Ovary (tissue), 10 donors: ENCODE measurements at regions of chr19 and their contacts with region 1.

Region 1: DNA sequence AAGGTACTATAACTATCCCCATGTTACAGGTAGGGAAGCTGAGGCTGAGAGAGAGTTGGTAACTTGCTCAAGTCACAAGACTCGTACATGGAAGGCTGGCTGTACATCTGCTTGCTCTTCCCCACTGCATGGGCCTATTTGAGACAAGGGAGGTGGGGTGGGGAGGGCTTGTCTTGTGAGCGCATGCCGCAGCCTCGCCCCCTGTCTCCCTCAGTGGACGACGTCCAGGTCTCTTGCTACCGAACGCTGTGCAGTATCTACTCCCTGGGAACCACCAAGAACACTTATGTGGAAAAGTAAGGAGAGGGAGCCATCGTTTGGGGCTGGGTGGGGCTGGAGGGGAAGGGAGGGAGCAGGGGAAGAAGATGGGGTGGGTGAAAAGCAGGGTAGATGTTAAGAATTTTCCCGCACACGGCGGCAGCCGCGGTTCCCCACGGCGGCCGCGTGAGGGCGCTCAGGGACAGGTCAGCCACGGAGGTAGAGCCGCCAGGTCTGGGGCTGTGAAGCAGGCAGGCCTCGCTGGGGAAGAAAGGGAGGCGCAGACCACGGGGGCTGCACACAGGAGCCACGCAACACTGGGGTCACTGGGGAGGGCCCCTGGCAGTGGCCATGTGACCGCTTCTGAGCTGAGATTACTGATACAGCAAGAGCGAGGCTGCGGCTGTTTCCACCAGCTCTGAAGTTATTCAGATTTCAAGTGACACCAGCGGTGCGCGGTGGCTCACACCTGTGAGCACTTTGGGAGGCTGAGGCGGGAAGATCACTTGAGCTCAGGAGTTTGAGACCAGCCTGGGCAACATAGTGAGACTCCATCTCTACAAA is 81.5 kb downstream of the RYR1 start:
- DNase-seq: peak; percentile 52 to 81 (median 65)
- H3K4me3 ChIP-seq: no peak overlapping the region
- H3K27ac ChIP-seq: no peak overlapping the region
- H3K4me1 ChIP-seq: peaks cover 2% of the 10 kb centered on the region
- H3K27me3 ChIP-seq: no peaks in the 10 kb centered on the region
- CTCF ChIP-seq: peak; percentile 51 to 83 (median 67)
- EP300 ChIP-seq: no peak
- POLR2A ChIP-seq: no peak

Region 2: GRCh38 chr19:38470788-38471480 is 44.1 kb before region 1 on chr19:
- intact Hi-C with region 1: no loop called
- DNase-seq: no peak
- H3K4me3 ChIP-seq: no peak overlapping the region
- H3K27ac ChIP-seq: no peak overlapping the region
- H3K4me1 ChIP-seq: no peaks in the 10 kb centered on the region
- H3K27me3 ChIP-seq: no peaks in the 10 kb centered on the region
- CTCF ChIP-seq: no peak
- EP300 ChIP-seq: no peak
- POLR2A ChIP-seq: no peak

Region 3: GRCh38 chr19:38606131-38606530 is 91.1 kb after region 1 on chr19:
- intact Hi-C with region 1: loop called in 1 of 4 experiments (anchors 10 kb)
- DNase-seq: no peak
- H3K4me3 ChIP-seq: no peak overlapping the region
- H3K27ac ChIP-seq: no peak overlapping the region
- H3K4me1 ChIP-seq: no peaks in the 10 kb centered on the region
- H3K27me3 ChIP-seq: no peaks in the 10 kb centered on the region
- CTCF ChIP-seq: no peak
- EP300 ChIP-seq: no peak
- POLR2A ChIP-seq: no peak

Region 4: DNA sequence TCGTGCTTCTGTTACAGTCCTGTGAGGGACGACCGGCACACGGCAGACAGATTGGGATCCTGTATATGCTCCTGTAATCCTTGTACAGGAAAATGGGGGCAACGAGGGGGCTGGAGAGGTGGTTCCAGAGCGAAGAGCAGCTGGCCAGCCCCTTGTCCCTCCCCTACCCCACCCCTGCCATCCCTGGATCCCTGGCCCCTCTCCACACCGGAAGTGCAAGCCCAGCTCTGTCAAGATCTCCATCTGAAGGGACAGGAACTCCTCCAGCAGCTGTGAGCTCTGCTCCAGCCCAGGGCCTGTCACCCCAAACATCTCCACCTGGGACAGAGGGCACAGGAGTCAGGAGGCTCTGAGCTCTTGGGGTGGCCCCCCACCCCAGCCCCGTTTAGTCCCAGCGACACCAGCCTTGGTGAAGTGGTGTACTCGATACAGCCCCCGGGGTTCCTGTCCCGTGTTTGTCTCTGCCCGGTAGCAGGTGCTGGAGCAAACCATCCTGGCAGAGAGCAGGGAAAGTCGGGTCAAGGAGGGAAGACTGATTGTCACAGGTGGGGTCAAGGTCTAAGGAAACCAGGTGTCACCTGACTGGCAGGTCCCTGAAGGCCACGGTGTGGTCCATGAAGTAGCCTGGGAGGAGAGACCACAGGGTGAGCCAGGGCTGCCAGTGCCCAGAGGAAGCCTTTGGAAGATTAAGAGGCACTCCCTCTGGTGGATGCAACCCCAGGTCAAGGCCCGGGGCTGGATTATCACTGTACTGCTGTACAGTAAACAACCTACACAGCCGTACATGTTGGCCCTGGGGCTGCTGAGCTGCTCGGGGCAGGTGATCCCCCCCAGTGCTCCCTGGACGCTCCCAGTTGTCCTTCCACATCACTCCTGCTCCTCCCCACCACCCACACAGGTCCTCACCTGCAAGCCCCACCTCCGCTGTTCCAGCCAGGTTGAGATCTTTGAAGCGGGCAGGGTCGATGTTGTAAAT is 402.8 kb after region 1 on chr19:
- intact Hi-C with region 1: loop called in 1 of 4 experiments (anchors 10 kb)
- DNase-seq: peak in 1 of 5 donors; percentile 36
- H3K4me3 ChIP-seq: no peak overlapping the region
- H3K27ac ChIP-seq: no peak overlapping the region
- H3K4me1 ChIP-seq: no peaks in the 10 kb centered on the region
- H3K27me3 ChIP-seq: no peaks in the 10 kb centered on the region
- CTCF ChIP-seq: no peak
- EP300 ChIP-seq: no peak
- POLR2A ChIP-seq: no peak

Region 5: DNA sequence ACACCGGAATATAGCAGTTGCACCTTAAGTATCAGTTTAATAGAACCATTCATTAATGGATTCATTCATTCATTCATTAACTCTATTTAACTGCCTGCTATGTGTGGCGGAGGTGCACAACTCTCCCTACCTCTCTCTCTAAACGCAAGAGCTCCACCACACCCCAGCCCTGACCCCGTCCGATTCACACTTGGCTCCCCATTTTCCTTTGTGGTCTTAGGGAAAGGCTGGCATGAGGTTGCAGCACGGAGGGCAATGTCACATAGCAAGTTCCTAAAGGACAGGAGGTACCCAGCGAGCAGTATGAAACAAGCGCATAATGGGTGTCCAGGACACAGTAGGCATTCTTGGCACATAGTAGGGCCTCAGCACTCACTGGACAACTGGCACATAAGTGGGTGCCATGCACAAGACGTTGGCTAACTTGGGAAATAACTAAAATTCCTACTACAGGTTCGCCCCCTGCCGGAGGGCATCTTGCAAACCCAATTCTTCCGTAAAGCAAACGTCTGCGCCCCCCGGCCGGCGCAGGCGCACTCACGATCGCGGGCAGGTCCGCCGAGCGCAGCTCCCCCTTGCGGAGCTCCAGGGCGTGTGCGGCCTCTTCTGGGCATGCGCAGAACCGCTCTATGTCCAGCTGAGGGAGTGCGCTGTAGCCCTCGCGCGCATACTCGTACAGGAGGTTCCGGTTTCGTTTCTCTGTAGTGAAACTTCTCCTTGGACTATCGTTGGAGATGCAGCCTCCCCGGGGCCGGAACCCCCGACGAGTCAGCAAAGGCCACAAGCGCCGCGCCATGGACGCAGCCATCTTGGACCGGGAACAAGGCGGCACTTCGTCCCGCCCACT is 415.1 kb after region 1 on chr19 and contains the start of gene SARS2:
- intact Hi-C with region 1: loop called in 1 of 4 experiments (anchors 5 kb)
- DNase-seq: peak; percentile 91 to 96 (median 93)
- H3K4me3 ChIP-seq: peak within 1 kb of the TSS; percentile 91
- H3K27ac ChIP-seq: peak within 1 kb of the TSS; percentile 90 to 92
- H3K4me1 ChIP-seq: peaks cover 12% of the 10 kb centered on the region
- H3K27me3 ChIP-seq: no peaks in the 10 kb centered on the region
- CTCF ChIP-seq: peak; percentile 98 to 99 (median 99)
- EP300 ChIP-seq: no peak
- POLR2A ChIP-seq: no peak
- total RNA-seq, gene SARS2: 9.8 to 20.6 (median 18.0) TPM